ENCODE measurements at regions of chr13 and their contacts with region 1.

Region 1: DNA sequence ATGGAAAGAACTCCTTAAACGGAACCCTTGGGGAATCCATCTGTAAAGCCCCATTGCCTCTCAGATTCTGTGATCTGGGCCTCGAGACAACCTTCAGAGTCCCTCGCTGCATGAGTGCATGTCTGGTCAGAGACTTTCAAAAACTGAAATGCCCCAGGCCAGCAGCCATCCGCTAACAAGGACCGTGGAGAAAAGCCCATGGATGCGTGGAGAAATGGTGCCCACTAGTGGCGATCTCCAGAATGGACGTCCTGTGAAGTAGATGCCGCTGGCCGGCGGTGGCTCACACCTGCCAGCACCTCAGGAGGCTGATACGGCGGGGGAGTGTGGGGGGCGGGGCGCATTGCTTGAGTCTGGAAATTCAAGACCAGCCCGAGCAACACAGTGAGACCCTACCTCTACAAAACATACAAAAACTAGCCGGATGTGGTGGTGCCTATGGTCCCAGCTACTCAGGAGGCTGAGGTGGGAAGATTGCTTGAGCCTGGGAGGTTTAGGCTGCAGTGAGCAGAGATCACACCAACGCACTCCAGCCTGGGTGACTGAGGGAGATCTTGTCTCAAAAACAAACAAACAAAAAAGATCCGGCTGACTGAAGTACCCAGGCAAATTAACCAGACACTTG is 7.9 kb upstream of the CDC16 start:
- DNase-seq: peak; percentile 66 to 96 (median 89)

Region 2: GRCh38 chr13:113951246-113951999 is 275.4 kb before region 1 on chr13:
- intact Hi-C with region 1: loop called (anchors 2 kb)
- DNase-seq: peak; percentile 50 to 88 (median 80)

Region 3: DNA sequence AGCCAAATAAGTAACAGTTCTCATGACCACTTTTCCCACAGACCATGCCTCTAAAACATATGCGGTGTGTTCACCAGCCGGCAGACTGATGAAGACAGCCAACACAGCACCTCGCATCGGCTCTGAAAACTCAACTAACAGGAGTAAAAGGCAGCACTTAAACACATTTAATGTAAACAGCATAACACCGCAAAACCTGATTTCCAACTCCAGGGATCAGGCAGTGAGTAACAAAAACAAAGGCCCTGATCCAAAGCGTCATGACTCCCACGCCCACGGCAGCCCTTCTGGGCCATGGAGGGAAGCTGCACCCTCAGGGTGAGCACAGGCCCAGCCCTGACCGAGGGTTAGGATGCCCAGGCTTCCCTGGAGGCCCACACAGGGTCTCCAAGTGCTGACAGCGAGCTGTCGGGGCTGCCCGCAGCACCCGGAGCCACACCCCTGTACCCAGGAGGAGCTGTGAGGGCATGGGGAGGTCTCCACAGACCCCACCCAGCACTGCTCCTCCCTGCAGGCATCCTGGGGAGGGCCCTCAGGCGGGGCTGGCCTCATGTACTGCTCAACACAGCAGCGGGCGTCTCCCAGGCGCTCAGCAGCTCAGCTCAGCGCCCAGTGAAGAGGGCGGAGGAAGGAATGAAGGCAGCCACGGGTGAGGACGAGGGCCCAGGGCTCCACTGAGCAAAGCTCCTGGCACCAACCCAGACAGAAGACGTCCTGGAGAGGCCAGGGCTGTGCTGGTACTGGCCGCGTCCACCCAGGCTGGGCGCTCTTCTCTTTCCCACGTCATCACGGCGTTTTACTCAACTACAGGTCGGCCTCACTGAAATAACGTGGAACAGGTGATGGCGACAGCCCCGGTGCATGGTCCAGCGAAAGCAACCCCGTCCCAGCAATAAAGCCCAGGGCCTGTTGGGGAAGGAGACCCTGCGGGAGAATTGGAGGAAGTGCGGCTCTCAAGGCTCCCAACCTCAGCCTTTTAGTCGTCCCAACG is 148.1 kb before region 1 on chr13:
- intact Hi-C with region 1: no loop called
- DNase-seq: peak in 18 of 42 donors; percentile 0 to 36 (median 8)

Region 4: DNA sequence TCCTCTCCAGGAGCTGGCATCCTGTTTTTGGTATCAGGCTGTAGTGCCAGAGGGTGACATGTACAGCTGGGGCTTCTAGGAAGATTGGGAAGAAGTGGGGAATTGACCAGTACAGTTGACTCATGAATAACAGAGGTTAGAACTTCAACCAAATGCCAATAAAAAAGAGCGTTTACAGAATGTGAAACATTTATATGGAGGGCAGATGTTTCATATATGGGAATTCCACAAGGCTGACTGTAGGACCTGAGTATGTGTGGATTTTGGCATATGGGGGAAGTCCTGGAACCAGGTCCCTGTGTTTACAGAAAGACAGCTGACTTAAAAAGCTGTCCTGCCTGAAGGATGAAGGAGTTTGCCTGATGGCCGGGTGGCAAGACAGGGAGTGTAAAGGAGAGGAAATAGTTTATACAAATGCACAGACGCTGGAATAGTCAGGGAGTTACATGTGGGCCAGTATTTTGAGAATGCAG is 92.7 kb after region 1 on chr13:
- intact Hi-C with region 1: no loop called
- DNase-seq: no peak

Measured in head of caudate nucleus (tissue), 42 donors.